ENCODE measurements at regions of chr15 and their contacts with region 1.

Region 1: DNA sequence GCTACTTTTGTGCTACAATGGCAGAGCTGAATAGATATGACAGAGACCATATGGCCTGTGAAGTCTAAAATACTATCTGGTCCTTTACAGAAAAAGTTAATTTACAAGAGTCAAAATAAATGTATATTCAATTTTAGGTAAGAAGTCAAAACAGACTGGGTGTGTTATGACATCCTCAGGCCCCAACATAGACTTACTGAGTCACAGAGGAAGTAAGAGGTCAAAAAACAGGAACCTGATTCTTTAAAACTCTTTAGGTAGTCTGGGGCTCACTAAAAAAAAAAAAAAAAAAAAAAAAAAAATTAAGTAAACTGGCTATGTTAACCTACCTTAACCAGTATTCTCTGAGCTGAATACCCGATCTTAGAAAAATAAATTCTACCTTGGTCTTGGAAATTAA is 13.1 kb downstream of the DNAAF4 start:
- DNase-seq: no peak
- H3K4me3 Mint-ChIP-seq: no peak overlapping the region
- H3K27ac Mint-ChIP-seq: no peak overlapping the region
- H3K4me1 Mint-ChIP-seq: peaks cover 7% of the 10 kb centered on the region
- H3K27me3 Mint-ChIP-seq: no peaks in the 10 kb centered on the region

Region 2: DNA sequence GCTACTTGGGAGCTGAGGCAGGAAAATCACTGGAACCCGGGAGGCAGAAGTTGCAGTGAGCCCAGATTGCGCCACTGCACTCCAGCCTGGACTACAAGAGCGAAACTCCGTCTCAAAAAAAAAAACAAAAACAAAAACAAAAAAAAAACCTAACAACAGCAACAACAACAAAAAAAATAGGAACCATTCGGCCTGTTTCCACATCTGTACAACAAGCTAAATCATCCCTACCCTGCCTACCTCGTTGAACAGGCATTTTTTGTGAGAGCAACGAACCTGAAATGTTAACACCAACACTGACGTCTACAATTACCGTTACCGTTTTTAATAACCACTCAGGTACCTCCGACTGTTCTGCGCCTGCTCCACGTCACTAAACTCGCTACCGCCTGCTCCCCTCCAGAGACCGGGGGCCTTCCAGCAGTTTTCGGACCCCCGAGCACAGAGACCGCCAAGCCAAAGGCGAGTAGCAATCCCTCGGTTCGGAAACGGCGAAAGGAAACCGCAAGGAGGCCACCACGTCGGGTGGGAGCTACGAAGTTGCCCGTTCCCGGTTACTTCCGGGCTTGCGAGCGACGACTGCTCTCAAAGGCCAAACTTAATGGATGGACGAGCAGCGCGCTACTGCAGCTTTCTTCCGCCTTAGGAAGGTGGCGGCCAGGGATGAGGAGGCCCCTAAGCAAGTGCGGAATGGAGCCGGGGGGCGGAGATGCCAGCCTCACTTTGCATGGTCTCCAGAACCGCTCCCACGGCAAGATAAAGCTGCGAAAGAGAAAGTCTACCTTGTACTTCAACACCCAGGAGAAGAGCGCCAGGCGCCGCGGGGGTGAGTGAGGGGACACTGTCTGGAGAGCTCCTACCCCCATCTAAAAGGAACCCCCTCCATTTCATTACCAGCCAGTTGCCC is 176.1 kb before region 1 on chr15 and contains the starts of genes PIGB and PIGBOS1:
- intact Hi-C with region 1: loop called (anchors 5 kb)
- DNase-seq: peak; percentile 95
- H3K4me3 Mint-ChIP-seq: peak within 1 kb of the TSS; percentile 97
- H3K27ac Mint-ChIP-seq: peak within 1 kb of the TSS; percentile 99
- H3K4me1 Mint-ChIP-seq: peaks cover 39% of the 10 kb centered on the region
- H3K27me3 Mint-ChIP-seq: no peaks in the 10 kb centered on the region
- total RNA-seq, gene PIGB: 13.3 and 18.6 TPM in 2 replicates
- total RNA-seq, gene PIGBOS1: 9.7 and 10.3 TPM in 2 replicates